Left lung (tissue), 14 donors: ENCODE measurements at regions of chr15 and their contacts with region 1.

Region 1: DNA sequence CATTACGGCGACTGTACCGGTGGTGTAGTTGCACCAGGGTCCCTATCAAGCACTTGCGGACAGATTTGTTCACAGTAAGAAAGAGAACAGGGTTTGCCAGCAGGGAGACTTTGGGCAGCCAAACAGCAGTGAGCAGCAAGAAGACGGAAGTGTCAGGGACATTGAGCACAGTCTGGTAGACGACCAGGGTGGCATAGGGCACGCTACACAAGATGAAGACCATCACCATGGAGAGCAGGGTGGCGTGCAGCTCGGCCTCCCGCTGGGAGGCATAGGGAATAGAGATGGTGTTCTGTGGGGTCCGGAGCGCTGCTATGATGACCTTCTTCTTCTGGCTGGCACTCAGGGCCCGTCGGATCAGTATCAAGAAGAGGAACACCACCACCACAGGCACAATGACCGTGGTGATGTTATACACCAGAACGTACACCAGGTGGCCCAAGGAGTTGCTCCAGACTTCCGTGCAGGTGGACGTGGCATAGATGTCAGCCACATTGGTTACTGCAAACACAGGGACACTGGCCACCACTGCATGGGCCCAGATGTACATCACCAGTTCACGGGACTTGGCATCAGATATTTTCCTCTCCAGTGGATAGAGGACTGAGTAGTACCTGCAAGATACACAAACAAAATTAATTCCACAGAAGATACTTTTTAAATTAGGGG is 19.1 kb upstream of the FSIP1 start:
- DNase-seq: no peak
- ATAC-seq: peak; percentile 78
- H3K4me3 ChIP-seq: no peak overlapping the region
- H3K27ac ChIP-seq: no peak overlapping the region
- H3K4me1 ChIP-seq: peaks cover 0 to 4% of the 10 kb centered on the region in 2 donors
- H3K27me3 ChIP-seq: no peaks in the 10 kb centered on the region
- CTCF ChIP-seq: peak in 1 of 2 donors; percentile 13

Region 2: DNA sequence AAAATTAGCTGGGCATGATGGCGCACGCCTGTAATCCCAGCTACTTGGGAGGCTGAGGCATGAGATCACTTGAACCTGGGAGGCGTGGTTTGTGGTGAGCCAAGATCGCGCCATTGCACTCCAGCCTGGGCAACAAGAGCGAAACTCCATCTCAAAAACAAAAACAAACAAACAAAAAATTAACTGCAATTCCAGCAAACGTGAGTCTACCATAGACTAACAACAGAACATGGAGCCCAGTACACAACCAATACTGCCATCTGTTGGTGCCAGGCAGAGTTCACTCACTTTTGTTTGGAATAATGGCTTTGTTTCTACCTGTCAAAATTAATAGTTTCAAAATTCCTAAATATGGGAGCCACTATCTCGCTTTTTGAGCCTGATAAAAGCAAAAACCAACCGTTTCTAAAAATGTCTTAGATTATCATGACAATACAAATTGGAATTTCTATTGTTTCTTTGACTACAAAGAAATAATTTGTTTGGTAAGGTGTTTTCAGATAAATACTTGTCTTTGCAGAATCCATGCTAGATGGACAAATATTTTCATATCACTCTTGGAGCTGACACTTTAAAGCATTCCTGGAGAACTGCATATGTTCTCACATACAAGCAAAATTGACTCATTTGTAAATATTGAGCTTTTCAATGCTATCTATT is 73.2 kb after region 1 on chr15:
- intact Hi-C with region 1: loop called (anchors 5 to 10 kb)
- DNase-seq: peak in 1 of 4 donors; percentile 36
- ATAC-seq: peak; percentile 86
- H3K4me3 ChIP-seq: no peak overlapping the region
- H3K27ac ChIP-seq: no peak overlapping the region
- H3K4me1 ChIP-seq: no peaks in the 10 kb centered on the region
- H3K27me3 ChIP-seq: no peaks in the 10 kb centered on the region
- CTCF ChIP-seq: peak; percentile 29 to 63

Region 3: DNA sequence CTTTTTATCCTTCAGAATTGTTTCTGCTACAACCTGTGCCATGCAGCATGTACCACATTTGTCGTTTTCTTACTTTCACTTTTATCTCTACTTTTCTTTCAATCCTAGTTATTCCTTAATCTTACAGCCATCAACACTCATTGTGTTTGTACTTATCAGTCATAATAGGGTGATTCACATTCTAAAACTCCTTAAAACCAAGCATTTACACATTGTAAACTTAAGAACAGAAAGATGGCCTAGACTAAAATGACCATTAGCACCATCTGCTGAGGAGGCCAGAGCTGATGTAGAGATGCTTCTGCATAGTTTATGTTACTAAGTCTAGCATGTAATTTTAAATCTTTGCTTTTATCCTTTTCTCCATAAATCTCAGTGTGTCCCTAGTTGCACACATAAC is 157.6 kb after region 1 on chr15:
- intact Hi-C with region 1: no loop called
- DNase-seq: no peak
- ATAC-seq: no peak
- H3K4me3 ChIP-seq: no peak overlapping the region
- H3K27ac ChIP-seq: no peak overlapping the region
- H3K4me1 ChIP-seq: no peaks in the 10 kb centered on the region
- H3K27me3 ChIP-seq: no peaks in the 10 kb centered on the region
- CTCF ChIP-seq: no peak